ENCODE measurements at regions of chr4 and their contacts with region 1.

Region 1: DNA sequence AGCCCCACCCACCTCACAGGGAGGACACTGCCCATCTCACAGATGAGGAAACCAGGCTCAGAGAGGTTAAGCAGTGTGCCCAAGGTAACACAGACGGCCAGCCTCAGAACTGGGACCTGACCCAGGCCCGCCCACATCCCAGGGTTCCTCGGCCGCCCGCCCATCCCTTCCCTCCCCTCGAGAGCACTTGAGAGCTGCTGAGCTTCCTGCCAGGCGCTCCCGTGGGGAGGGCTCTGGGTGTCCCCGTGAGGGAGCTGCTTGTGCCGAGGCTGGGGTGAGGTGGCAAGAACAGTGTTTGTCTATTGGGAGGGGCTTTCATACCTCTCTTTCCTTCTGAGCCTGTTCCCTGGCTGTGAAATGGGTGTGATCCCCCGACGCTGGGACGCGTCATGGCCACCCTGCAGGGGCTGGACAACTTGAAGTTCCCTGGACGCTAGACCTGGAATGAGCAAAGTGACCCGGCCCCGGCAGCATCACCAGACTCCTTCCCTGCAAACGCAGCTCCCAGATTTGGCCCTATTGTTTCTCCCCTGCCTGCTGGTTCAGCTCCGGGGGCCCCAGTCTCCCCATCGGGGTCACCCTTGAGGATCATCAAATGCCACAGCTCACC is 204.9 kb downstream of the AFAP1 start:
- DNase-seq: no peak
- H3K4me3 ChIP-seq: no peak overlapping the region
- H3K27ac ChIP-seq: no peak overlapping the region
- H3K4me1 ChIP-seq: no peaks in the 10 kb centered on the region
- CTCF ChIP-seq: no peak

Region 2: GRCh38 chr4:5839751-5840674 is 1894.7 kb before region 1 on chr4:
- CTCF ChIA-PET with region 1: interaction called, 16 read pairs
- POLR2A ChIA-PET with region 1: no interaction called
- intact Hi-C with region 1: no loop called
- DNase-seq: no peak
- H3K4me3 ChIP-seq: no peak overlapping the region
- H3K27ac ChIP-seq: no peak overlapping the region
- H3K4me1 ChIP-seq: no peaks in the 10 kb centered on the region
- CTCF ChIP-seq: no peak

Region 3: GRCh38 chr4:7487502-7487901 is 247.3 kb before region 1 on chr4:
- CTCF ChIA-PET with region 1: no interaction called
- POLR2A ChIA-PET with region 1: no interaction called
- intact Hi-C with region 1: no loop called
- DNase-seq: no peak
- H3K4me3 ChIP-seq: no peak overlapping the region
- H3K27ac ChIP-seq: no peak overlapping the region
- H3K4me1 ChIP-seq: no peaks in the 10 kb centered on the region
- CTCF ChIP-seq: no peak